ENCODE measurements at regions of chr1 and their contacts with region 1.

Region 1: DNA sequence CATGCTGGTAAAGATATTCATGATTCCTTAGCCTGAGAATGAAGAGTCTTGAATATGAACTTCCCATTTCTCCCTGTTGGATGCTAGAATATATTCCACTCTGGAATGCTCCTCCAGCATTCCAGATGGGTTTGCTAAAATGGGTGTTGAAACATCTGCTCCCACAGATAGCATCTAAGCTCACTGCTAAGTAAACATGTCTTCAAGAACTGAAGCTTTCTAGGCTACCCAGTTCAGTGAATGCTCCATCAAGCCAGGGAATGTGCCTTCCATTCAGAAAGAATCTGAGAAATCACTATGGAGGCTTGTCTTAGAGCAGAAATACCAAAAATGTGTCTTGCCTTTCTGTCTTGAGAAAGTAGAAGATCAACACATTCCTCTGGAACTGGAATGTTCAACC is 81.1 kb downstream of the TNFSF18 start:
- DNase-seq: peak; percentile 84
- ATAC-seq: peak; percentile 73
- H3K4me3 ChIP-seq: no peak overlapping the region
- H3K27ac ChIP-seq: no peak overlapping the region
- H3K4me1 ChIP-seq: peaks cover 13% of the 10 kb centered on the region
- H3K27me3 ChIP-seq: no peaks in the 10 kb centered on the region
- CTCF ChIP-seq: no peak
- POLR2A ChIP-seq: no peak
- RAD21 ChIP-seq: no peak

Region 2: DNA sequence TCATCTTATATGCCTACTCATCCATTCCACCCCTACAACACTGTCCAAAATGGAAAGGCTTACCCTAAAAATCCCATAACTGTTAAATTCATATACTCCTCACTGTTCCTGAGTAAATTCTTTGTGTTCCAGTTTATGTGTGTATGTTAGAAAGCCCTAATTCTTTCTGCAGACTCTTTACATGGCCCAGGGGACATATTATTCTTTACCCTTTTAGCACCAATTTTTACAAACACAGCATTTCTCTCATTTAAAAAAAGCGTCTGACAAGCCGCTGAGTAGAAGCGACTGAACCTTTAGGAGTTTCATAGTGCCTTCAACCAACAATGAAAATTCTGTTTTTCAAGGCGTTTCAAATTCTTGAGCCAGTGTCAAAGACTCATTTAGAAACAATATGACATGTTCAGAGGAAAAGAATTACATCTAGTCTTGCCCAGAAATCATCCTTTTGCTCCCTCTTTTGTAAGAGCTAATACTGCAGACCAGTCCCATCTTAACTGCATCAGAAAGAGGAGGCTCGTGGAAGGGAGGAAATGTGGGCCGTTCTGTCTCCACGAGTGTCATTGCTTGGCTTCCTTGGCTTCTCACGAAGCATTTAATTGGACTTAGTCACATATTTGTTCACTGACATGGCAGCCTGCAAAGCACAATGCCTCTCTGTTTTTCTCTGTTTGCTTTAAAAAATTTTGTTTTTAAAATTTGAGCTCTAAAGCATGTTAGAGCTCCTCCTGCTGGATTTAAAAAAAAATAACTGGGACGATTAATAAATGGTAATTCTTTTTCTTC is 570.4 kb before region 1 on chr1:
- CTCF ChIA-PET with region 1: no interaction called
- POLR2A ChIA-PET with region 1: no interaction called
- dilution Hi-C with region 1: no loop called
- in situ Hi-C with region 1: no loop called
- intact Hi-C with region 1: no loop called
- DNase-seq: peak; percentile 92
- ATAC-seq: peak; percentile 88
- H3K4me3 ChIP-seq: no peak overlapping the region
- H3K27ac ChIP-seq: peak overlapping the region; percentile 59; the same call in 1 of the 2 replicates
- H3K4me1 ChIP-seq: peaks cover 3% of the 10 kb centered on the region
- H3K27me3 ChIP-seq: no peaks in the 10 kb centered on the region
- CTCF ChIP-seq: peak; percentile 74
- POLR2A ChIP-seq: 0 out of 2 replicates have a peak, but pooled peaks have one; percentile 27
- RAD21 ChIP-seq: peak; percentile 82

Region 3: DNA sequence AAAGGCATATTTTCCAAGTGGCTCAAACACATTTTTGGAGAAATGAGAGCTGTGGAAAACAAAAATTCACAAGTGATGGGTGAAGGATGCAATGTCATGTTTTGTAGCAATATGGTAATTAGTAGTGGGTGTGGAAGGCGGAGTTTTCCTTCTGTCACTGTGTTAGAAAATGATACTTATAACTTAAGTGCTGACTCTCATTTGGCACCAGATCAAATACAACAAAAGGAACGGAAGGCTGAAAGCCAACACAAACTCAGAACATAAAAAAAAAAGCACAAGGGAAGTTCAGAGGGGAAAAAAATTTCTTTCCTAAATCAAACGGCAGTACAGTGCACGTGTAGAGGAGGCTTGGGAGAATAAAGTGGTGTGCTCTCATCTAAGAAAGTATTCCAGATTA is 81.3 kb after region 1 on chr1 and contains the start of gene TNFSF18:
- CTCF ChIA-PET with region 1: no interaction called
- POLR2A ChIA-PET with region 1: interaction called, 13 read pairs
- dilution Hi-C with region 1: no loop called
- in situ Hi-C with region 1: no loop called
- intact Hi-C with region 1: no loop called
- DNase-seq: peak; percentile 45
- ATAC-seq: no peak
- H3K4me3 ChIP-seq: no peak within 1 kb of the TSS
- H3K27ac ChIP-seq: no peak within 1 kb of the TSS
- H3K4me1 ChIP-seq: 0 out of 2 replicates have a peak, but pooled peaks cover 2% of the 10 kb centered on the region
- H3K27me3 ChIP-seq: no peaks in the 10 kb centered on the region
- CTCF ChIP-seq: no peak
- POLR2A ChIP-seq: no peak
- RAD21 ChIP-seq: no peak
- total RNA-seq, gene TNFSF18: 0.18 and 0.28 TPM in 2 replicates

Region 4: GRCh38 chr1:173134029-173134428 is 164.4 kb after region 1 on chr1:
- CTCF ChIA-PET with region 1: no interaction called
- POLR2A ChIA-PET with region 1: no interaction called
- dilution Hi-C with region 1: no loop called
- in situ Hi-C with region 1: no loop called
- intact Hi-C with region 1: no loop called
- DNase-seq: peak; percentile 87
- ATAC-seq: peak; percentile 64; the same call in 1 of the 2 replicates
- H3K4me3 ChIP-seq: no peak overlapping the region
- H3K27ac ChIP-seq: no peak overlapping the region
- H3K4me1 ChIP-seq: no peaks in the 10 kb centered on the region; the same call in 1 of the 2 replicates
- H3K27me3 ChIP-seq: no peaks in the 10 kb centered on the region
- CTCF ChIP-seq: no peak
- POLR2A ChIP-seq: no peak
- RAD21 ChIP-seq: no peak

Measured in IMR-90 (cell line).